PC-9 (cell line): ENCODE measurements at regions of chr1 and their contacts with region 1.

Region 1: GRCh38 chr1:221543529-221544120 is 198.3 kb downstream of the DUSP10 start:
- DNase-seq: peak in 1 of 2 experiments; percentile 3
- H3K4me3 ChIP-seq: no peak overlapping the region
- H3K27ac ChIP-seq: no peak overlapping the region
- H3K4me1 ChIP-seq: no peaks in the 10 kb centered on the region
- H3K27me3 ChIP-seq: no peaks in the 10 kb centered on the region
- CTCF ChIP-seq: peak; percentile 67

Region 2: GRCh38 chr1:220879076-220879508 is 664.5 kb before region 1 on chr1 and contains the start of gene HLX:
- CTCF ChIA-PET with region 1: no interaction called
- POLR2A ChIA-PET with region 1: no interaction called
- intact Hi-C with region 1: loop called (anchors 10 kb)
- DNase-seq: peak; percentile 51 to 58
- H3K4me3 ChIP-seq: peak within 1 kb of the TSS; percentile 93
- H3K27ac ChIP-seq: no peak within 1 kb of the TSS
- H3K4me1 ChIP-seq: peaks cover 6% of the 10 kb centered on the region
- H3K27me3 ChIP-seq: no peaks in the 10 kb centered on the region
- CTCF ChIP-seq: no peak
- total RNA-seq, gene HLX: 1.1 and 1.8 TPM in 2 replicates

Region 3: DNA sequence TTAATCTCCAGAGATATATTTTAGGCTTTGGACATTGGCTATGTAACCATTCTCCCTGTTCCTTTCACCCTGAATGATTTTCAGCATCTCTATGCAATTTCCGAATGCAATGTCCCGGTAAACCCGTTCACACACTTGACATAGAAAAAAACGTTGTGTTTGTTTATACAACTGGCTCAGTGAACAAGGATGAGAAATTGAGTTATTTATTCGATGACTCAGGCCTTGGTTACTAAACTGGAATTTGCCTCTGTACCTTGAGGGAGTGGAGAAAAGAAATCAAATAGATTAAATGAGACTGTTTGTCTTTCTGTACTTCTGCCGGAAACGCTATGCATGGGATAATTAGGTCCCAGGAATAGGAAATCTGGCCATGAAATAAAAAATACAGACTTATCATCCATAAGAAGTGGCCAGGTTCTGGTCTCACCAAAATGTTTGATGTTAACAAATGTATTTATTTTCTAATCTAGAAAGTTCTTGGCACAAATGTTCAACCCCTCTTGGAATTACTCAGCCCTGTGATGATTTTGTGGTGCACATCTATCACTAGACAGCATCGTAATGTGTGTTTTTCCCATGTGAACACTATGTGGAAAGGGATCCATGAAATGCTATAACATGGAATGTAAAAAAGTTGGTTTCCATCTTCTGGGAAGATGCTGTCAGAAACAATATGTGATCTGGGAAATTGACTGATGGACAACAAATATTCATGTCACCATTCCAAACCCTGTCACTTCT is 55.7 kb before region 1 on chr1:
- CTCF ChIA-PET with region 1: no interaction called
- POLR2A ChIA-PET with region 1: no interaction called
- intact Hi-C with region 1: loop called (anchors 2 kb)
- DNase-seq: peak; percentile 12 to 95
- H3K4me3 ChIP-seq: no peak overlapping the region
- H3K27ac ChIP-seq: peak overlapping the region; percentile 58
- H3K4me1 ChIP-seq: peaks cover 24% of the 10 kb centered on the region
- H3K27me3 ChIP-seq: no peaks in the 10 kb centered on the region
- CTCF ChIP-seq: no peak

Region 4: DNA sequence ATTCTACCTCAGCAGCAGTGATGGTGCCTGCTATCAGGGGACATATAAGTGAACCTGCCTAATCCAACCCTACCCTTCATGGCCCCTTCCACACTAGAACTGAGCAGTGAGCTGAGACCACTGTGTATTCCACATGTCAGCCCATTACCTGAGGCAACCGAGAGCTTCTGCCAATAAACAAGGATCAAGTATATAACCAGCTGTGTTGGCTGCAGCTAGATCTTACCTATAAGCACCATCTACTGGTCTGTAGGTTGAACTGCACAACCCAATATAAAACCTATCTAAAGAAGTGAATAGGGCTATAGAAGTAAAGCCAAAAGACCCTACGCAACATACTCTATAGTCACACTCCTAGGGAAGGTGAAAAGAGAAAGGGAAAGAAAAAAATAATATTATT is 627.4 kb after region 1 on chr1:
- CTCF ChIA-PET with region 1: interaction called, 3 read pairs
- POLR2A ChIA-PET with region 1: no interaction called
- intact Hi-C with region 1: loop called (anchors 2 kb)
- DNase-seq: peak; percentile 3 to 38
- H3K4me3 ChIP-seq: no peak overlapping the region
- H3K27ac ChIP-seq: no peak overlapping the region
- H3K4me1 ChIP-seq: no peaks in the 10 kb centered on the region
- H3K27me3 ChIP-seq: no peaks in the 10 kb centered on the region
- CTCF ChIP-seq: peak; percentile 85